SK-N-SH (cell line): ENCODE measurements at regions of chr7 and their contacts with region 1.

Region 1: DNA sequence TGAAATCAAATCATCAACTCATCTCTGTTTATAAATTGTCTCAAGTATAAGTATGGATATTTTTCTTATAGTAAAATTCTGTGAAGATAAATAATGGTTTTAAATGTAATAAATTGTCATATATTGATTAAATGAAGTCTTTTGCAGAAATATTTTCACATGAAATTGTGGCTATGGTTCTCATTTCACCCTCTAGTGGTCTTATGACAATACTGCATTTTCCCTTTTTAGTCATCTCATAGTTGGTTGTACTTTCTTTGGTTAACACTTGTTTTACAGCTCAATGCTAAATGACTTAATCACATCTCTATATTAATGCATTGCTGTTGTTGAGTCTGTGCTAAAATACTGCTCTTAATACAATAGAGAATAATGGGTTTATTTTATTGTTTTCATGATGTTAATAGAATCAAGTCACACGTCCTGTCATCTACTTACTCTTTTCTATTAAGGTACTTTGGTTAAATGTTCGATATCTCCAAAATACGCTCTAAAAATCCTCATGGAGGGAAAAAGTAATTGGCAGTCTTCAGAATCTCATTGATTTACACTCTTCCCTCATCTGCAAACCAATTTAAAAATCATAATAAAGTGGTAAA is 38.0 kb upstream of the CACNA2D1 start:
- DNase-seq: peak; percentile 50
- H3K4me3 ChIP-seq: no peak overlapping the region
- H3K27ac ChIP-seq: no peak overlapping the region
- H3K4me1 ChIP-seq: peaks cover 0 to 11% of the 10 kb centered on the region in 2 experiments; a peak in 2 of 4 replicates
- H3K27me3 ChIP-seq: no peaks in the 10 kb centered on the region
- CTCF ChIP-seq: peak; percentile 98
- EP300 ChIP-seq: no peak
- RAD21 ChIP-seq: peak; percentile 88

Region 2: GRCh38 chr7:82044497-82045080 is 437.0 kb before region 1 on chr7:
- CTCF ChIA-PET with region 1: interaction called, 11 read pairs
- POLR2A ChIA-PET with region 1: no interaction called
- DNase-seq: peak; percentile 16
- H3K4me3 ChIP-seq: no peak overlapping the region
- H3K27ac ChIP-seq: no peak overlapping the region
- H3K4me1 ChIP-seq: peaks cover 14 to 29% of the 10 kb centered on the region in 2 experiments; a peak in 3 of 4 replicates
- H3K27me3 ChIP-seq: no peaks in the 10 kb centered on the region
- CTCF ChIP-seq: peak; percentile 89
- EP300 ChIP-seq: 0 out of 4 replicates have a peak, but pooled peaks of 1 of the 2 experiments have one; percentile 16
- RAD21 ChIP-seq: peak; percentile 97

Region 3: DNA sequence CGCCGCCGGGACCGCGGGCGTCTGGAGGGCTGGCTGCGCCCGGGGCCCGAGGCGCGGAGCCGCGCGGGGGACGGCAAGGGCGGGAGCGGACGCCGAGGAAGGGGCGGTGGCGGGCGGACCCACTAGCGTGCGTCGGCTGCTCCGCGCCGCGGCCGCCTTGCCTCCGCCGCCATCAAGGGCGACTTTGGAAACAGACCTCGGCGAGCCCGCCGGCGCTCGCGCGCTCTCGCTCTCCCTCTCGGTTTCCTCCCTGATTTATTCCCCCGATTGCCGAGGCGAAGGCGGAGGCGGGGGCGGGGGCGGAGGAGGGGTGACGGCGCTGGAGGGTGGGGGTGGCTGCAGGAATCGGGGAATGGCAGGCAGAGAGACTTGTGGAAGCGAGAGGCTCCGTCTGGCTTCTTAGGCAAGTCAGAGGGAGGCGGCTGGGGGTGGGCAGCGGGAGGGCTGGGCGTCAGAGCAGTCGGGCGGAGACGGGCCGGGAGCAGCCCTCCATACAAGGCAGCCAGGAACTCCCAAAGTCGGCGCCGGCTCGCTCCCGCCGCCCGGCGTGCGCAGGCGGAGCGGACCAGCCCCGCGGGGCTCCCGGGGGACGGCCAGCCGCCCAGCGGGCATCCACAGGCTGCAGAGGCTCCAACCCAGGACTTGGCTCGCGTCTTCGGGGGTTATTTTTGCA is 37.9 kb before region 1 on chr7 and contains the start of gene CACNA2D1:
- CTCF ChIA-PET with region 1: interaction called, 16 read pairs
- POLR2A ChIA-PET with region 1: no interaction called
- DNase-seq: peak; percentile 97
- H3K4me3 ChIP-seq: peak within 1 kb of the TSS; percentile 89 to 100
- H3K27ac ChIP-seq: peak within 1 kb of the TSS; percentile 81 to 99
- H3K4me1 ChIP-seq: peaks cover 8 to 33% of the 10 kb centered on the region in 2 experiments; a peak in 3 of 4 replicates
- H3K27me3 ChIP-seq: no peaks in the 10 kb centered on the region
- CTCF ChIP-seq: no peak
- EP300 ChIP-seq: no peak
- RAD21 ChIP-seq: no peak
- polyA plus RNA-seq, gene CACNA2D1: 3.4 and 4.8 TPM in 2 replicates

Region 4: GRCh38 chr7:82468435-82468834 is 13.2 kb before region 1 on chr7:
- CTCF ChIA-PET with region 1: interaction called, 17 read pairs
- POLR2A ChIA-PET with region 1: no interaction called
- DNase-seq: no peak
- H3K4me3 ChIP-seq: no peak overlapping the region
- H3K27ac ChIP-seq: no peak overlapping the region
- H3K4me1 ChIP-seq: no peaks in the 10 kb centered on the region
- H3K27me3 ChIP-seq: no peaks in the 10 kb centered on the region
- CTCF ChIP-seq: no peak
- EP300 ChIP-seq: no peak
- RAD21 ChIP-seq: no peak

Region 5: DNA sequence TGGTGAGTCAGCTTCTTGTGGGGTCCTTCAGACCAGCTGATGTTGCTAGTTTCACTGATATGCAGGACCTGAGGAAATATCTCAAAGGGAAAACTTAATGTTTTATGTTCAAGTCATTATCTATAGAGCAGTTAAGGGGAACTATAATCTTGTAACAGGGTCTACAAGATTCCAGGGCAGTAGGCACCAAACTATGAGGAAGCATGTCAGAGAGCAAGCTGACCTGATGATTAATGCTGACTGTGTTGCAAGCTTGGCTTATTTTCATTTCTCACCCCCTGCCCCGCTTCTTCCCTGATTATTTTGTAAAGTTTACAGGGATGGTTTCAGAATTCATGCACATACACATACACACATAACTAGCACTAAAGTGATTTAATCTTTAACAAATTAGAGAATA is 46.2 kb after region 1 on chr7:
- CTCF ChIA-PET with region 1: interaction called, 10 read pairs
- POLR2A ChIA-PET with region 1: no interaction called
- DNase-seq: no peak
- H3K4me3 ChIP-seq: no peak overlapping the region
- H3K27ac ChIP-seq: no peak overlapping the region
- H3K4me1 ChIP-seq: no peaks in the 10 kb centered on the region; a peak in 2 of 4 replicates
- H3K27me3 ChIP-seq: no peaks in the 10 kb centered on the region
- CTCF ChIP-seq: no peak
- EP300 ChIP-seq: no peak
- RAD21 ChIP-seq: no peak